ENCODE measurements at regions of chr3 and their contacts with region 1.

Region 1: GRCh38 chr3:31768479-31769123 is 212.5 kb downstream of the OSBPL10 start:
- DNase-seq: peak; percentile 3 to 67 (median 48)
- ATAC-seq: no peak
- H3K4me3 ChIP-seq: no peak overlapping the region
- H3K4me3 Mint-ChIP-seq: no peak overlapping the region
- H3K27ac ChIP-seq: no peak overlapping the region
- H3K27ac Mint-ChIP-seq: no peak overlapping the region
- H3K4me1 ChIP-seq: no peaks in the 10 kb centered on the region
- H3K4me1 Mint-ChIP-seq: peaks cover 2% of the 10 kb centered on the region
- H3K27me3 ChIP-seq: no peaks in the 10 kb centered on the region
- H3K27me3 Mint-ChIP-seq: peaks cover 2% of the 10 kb centered on the region
- CTCF ChIP-seq: peak; percentile 35

Region 2: GRCh38 chr3:30112902-30113484 is 1655.6 kb before region 1 on chr3:
- CTCF ChIA-PET with region 1: no interaction called
- POLR2A ChIA-PET with region 1: no interaction called
- intact Hi-C with region 1: loop called in 1 of 2 experiments (anchors 10 kb)
- DNase-seq: peak in 2 of 9 experiments; percentile 43 to 61
- ATAC-seq: no peak
- H3K4me3 ChIP-seq: no peak overlapping the region
- H3K4me3 Mint-ChIP-seq: no peak overlapping the region
- H3K27ac ChIP-seq: no peak overlapping the region
- H3K27ac Mint-ChIP-seq: no peak overlapping the region
- H3K4me1 ChIP-seq: no peaks in the 10 kb centered on the region
- H3K4me1 Mint-ChIP-seq: peaks cover 6% of the 10 kb centered on the region
- H3K27me3 ChIP-seq: no peaks in the 10 kb centered on the region
- H3K27me3 Mint-ChIP-seq: no peaks in the 10 kb centered on the region
- CTCF ChIP-seq: peak; percentile 78

Region 3: DNA sequence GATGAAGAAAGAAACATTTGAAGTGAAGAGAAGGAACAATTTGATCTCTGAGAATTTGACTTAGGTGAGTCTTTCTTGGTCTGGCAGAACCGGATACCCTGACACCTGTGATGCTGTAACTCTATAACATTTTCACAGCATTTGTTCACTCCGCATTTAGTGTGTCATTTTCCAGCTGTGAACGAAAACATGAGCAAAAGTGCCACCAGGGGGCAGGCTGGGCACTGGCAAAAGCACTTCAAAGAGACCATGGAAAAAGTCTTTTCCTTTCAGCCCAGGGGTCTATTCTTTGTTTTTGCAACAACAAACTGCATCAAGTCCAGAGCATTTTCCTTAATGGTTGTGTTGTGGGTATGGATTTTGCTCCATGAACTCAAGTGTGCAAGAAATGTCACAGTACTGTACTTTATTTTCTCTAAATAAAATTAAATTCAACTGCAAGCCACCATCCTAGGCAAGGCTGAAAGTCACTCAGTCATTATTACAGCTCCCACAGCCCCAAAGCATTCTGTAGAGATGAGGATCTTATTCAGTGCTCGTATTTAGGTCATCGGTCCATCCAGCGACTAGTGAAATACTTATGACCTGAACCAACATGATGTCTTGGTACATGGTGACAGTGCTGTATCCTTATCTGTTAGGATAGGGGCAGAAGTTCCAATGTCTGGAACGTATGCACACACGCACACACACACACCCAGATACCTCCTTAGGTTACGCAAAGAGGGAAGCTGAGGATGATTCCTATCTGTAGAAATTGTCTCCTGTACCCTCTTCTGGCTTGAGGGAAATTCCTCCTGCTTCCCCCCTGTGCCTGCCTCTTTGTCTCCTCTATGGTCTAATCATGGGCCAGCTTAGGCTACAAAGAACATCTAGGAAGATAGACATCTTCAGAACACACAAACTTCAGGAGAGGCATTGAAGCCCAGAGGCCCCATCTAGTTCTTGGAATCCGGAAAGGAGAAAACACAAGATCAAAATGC is 999.6 kb before region 1 on chr3:
- CTCF ChIA-PET with region 1: interaction called, 17 read pairs
- POLR2A ChIA-PET with region 1: no interaction called
- intact Hi-C with region 1: loop called in 1 of 2 experiments (anchors 1 kb)
- DNase-seq: peak; percentile 34 to 80 (median 68)
- ATAC-seq: peak; percentile 48
- H3K4me3 ChIP-seq: no peak overlapping the region
- H3K4me3 Mint-ChIP-seq: no peak overlapping the region
- H3K27ac ChIP-seq: no peak overlapping the region
- H3K27ac Mint-ChIP-seq: no peak overlapping the region
- H3K4me1 ChIP-seq: no peaks in the 10 kb centered on the region
- H3K4me1 Mint-ChIP-seq: peaks cover 3% of the 10 kb centered on the region
- H3K27me3 ChIP-seq: no peaks in the 10 kb centered on the region
- H3K27me3 Mint-ChIP-seq: peaks cover 6% of the 10 kb centered on the region
- CTCF ChIP-seq: peak; percentile 76

Region 4: GRCh38 chr3:30934208-30934550 is 834.4 kb before region 1 on chr3:
- CTCF ChIA-PET with region 1: no interaction called
- POLR2A ChIA-PET with region 1: no interaction called
- intact Hi-C with region 1: loop called in 1 of 2 experiments (anchors 2 kb)
- DNase-seq: peak in 2 of 9 experiments; percentile 22 to 36
- ATAC-seq: no peak
- H3K4me3 ChIP-seq: no peak overlapping the region
- H3K4me3 Mint-ChIP-seq: no peak overlapping the region
- H3K27ac ChIP-seq: no peak overlapping the region
- H3K27ac Mint-ChIP-seq: no peak overlapping the region
- H3K4me1 ChIP-seq: no peaks in the 10 kb centered on the region
- H3K4me1 Mint-ChIP-seq: peaks cover 8% of the 10 kb centered on the region
- H3K27me3 ChIP-seq: no peaks in the 10 kb centered on the region
- H3K27me3 Mint-ChIP-seq: no peaks in the 10 kb centered on the region
- CTCF ChIP-seq: no peak

Region 5: GRCh38 chr3:31361371-31362273 is 407.0 kb before region 1 on chr3:
- CTCF ChIA-PET with region 1: no interaction called
- POLR2A ChIA-PET with region 1: no interaction called
- intact Hi-C with region 1: loop called in 1 of 2 experiments (anchors 10 kb)
- DNase-seq: no peak
- ATAC-seq: no peak
- H3K4me3 ChIP-seq: no peak overlapping the region
- H3K4me3 Mint-ChIP-seq: no peak overlapping the region
- H3K27ac ChIP-seq: no peak overlapping the region
- H3K27ac Mint-ChIP-seq: no peak overlapping the region
- H3K4me1 ChIP-seq: no peaks in the 10 kb centered on the region
- H3K4me1 Mint-ChIP-seq: peaks cover 9% of the 10 kb centered on the region
- H3K27me3 ChIP-seq: no peaks in the 10 kb centered on the region
- H3K27me3 Mint-ChIP-seq: no peaks in the 10 kb centered on the region
- CTCF ChIP-seq: no peak

Region 6: GRCh38 chr3:31550452-31551251 is 217.9 kb before region 1 on chr3:
- CTCF ChIA-PET with region 1: interaction called, 4 read pairs
- POLR2A ChIA-PET with region 1: no interaction called
- intact Hi-C with region 1: loop called in 1 of 2 experiments (anchors 1 kb)
- DNase-seq: peak in 2 of 9 experiments; percentile 59 to 72
- ATAC-seq: peak; percentile 73
- H3K4me3 ChIP-seq: no peak overlapping the region
- H3K4me3 Mint-ChIP-seq: peak overlapping the region; percentile 33
- H3K27ac ChIP-seq: no peak overlapping the region
- H3K27ac Mint-ChIP-seq: peak overlapping the region; percentile 70
- H3K4me1 ChIP-seq: peaks cover 57% of the 10 kb centered on the region
- H3K4me1 Mint-ChIP-seq: peaks cover 83% of the 10 kb centered on the region
- H3K27me3 ChIP-seq: no peaks in the 10 kb centered on the region
- H3K27me3 Mint-ChIP-seq: no peaks in the 10 kb centered on the region
- CTCF ChIP-seq: peak; percentile 64

Region 7: DNA sequence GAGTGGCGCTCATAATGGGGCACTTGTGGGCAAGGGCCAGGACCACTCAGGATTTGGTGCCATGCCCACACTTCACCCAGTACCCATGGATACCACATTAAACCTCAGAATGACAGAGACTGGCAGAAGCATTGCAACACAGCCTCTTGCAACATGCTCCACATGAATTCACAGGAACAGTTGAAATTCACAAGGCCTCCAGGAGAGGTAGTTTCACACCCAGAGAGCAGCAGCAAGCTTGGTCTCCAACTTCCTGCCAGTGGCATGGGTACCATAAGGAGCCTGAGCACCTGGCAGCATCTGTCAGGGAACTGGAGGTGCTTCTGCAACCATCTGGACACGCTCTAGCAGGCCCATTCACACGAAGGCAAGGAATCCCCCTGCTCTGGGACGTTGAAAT is 111.4 kb after region 1 on chr3:
- CTCF ChIA-PET with region 1: no interaction called
- POLR2A ChIA-PET with region 1: no interaction called
- intact Hi-C with region 1: no loop called
- DNase-seq: no peak
- ATAC-seq: no peak
- H3K4me3 ChIP-seq: no peak overlapping the region
- H3K4me3 Mint-ChIP-seq: no peak overlapping the region
- H3K27ac ChIP-seq: no peak overlapping the region
- H3K27ac Mint-ChIP-seq: no peak overlapping the region
- H3K4me1 ChIP-seq: no peaks in the 10 kb centered on the region
- H3K4me1 Mint-ChIP-seq: no peaks in the 10 kb centered on the region
- H3K27me3 ChIP-seq: no peaks in the 10 kb centered on the region
- H3K27me3 Mint-ChIP-seq: no peaks in the 10 kb centered on the region
- CTCF ChIP-seq: no peak